Activated CD4-positive, alpha-beta T cell treated with anti-CD3 and anti-CD28 coated beads, Interleukin-2, amount 10 ng/mL, durations not matched to agents 24 days and 14 days (primary cell): ENCODE measurements at regions of chr4 and their contacts with region 1.

Region 1: DNA sequence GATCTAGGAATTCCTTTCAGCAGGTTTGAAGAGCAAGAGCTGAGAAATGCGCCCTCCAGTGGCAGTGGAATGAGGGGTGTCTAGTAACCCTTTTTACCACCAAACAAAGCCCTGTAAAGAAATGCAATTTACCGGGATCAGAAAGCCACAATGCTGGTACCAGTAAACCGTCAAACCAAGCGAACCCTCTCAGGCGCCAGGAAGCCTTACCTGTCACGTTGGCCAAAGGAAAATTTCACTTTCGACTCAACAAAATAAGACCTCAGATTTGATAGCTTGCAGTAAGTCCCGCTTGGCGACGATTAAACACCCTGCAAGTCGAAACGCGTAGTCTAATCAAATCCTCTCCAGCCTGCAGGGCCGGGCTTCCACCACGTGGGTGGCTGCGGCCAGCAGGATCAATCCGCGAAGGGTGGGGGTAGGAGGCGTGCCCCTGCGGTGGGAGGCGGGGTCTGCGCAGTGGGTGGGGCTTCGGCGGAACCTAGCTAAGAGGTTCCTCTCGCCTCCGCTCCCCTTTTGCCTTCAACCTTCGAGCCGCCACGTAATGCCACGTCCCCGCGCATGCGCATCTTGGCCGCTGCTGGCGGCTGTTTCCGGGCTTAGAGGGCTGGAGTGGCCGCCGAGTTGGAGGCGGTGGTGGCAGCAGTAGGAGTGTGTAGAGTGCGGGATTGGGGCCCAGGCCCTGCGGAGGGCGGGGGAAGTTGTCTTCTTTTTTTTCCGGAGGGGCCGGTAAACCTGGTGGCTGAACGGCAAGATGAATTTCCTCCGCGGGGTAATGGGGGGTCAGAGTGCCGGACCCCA is at the start of gene USO1:
- DNase-seq: peak; percentile 100
- H3K4me3 Mint-ChIP-seq: peak within 1 kb of the TSS; percentile 99
- H3K27ac Mint-ChIP-seq: peak within 1 kb of the TSS; percentile 99
- H3K4me1 Mint-ChIP-seq: peaks cover 41% of the 10 kb centered on the region
- H3K27me3 Mint-ChIP-seq: no peaks in the 10 kb centered on the region
- total RNA-seq, gene USO1: 42.8 and 44.0 TPM in 2 replicates

Region 2: GRCh38 chr4:75514131-75514948 is 209.9 kb before region 1 on chr4 and contains the starts of genes RCHY1 and THAP6:
- intact Hi-C with region 1: loop called (anchors 1 kb)
- DNase-seq: peak; percentile 98
- H3K4me3 Mint-ChIP-seq: no peak within 1 kb of the TSS
- H3K27ac Mint-ChIP-seq: peak within 1 kb of the TSS; percentile 99
- H3K4me1 Mint-ChIP-seq: peaks cover 29% of the 10 kb centered on the region
- H3K27me3 Mint-ChIP-seq: no peaks in the 10 kb centered on the region
- total RNA-seq, gene RCHY1: 22.4 and 29.4 TPM in 2 replicates
- total RNA-seq, gene THAP6: 16.3 and 22.7 TPM in 2 replicates

Region 3: GRCh38 chr4:75653845-75654503 is 70.3 kb before region 1 on chr4:
- intact Hi-C with region 1: loop called (anchors 1 kb)
- DNase-seq: no peak
- H3K4me3 Mint-ChIP-seq: peak overlapping the region; percentile 76
- H3K27ac Mint-ChIP-seq: peak overlapping the region; percentile 81
- H3K4me1 Mint-ChIP-seq: peaks cover 42% of the 10 kb centered on the region
- H3K27me3 Mint-ChIP-seq: no peaks in the 10 kb centered on the region

Region 4: GRCh38 chr4:75698162-75698962 is 25.9 kb before region 1 on chr4:
- intact Hi-C with region 1: loop called (anchors 2 kb)
- DNase-seq: peak; percentile 71
- H3K4me3 Mint-ChIP-seq: peak overlapping the region; percentile 27
- H3K27ac Mint-ChIP-seq: peak overlapping the region; percentile 80
- H3K4me1 Mint-ChIP-seq: peaks cover 27% of the 10 kb centered on the region
- H3K27me3 Mint-ChIP-seq: no peaks in the 10 kb centered on the region

Region 5: GRCh38 chr4:75940692-75941253 is 216.5 kb after region 1 on chr4 and contains the start of gene NAAA:
- intact Hi-C with region 1: loop called (anchors 1 kb)
- DNase-seq: peak; percentile 96
- H3K4me3 Mint-ChIP-seq: peak within 1 kb of the TSS; percentile 98
- H3K27ac Mint-ChIP-seq: peak within 1 kb of the TSS; percentile 99
- H3K4me1 Mint-ChIP-seq: peaks cover 17% of the 10 kb centered on the region
- H3K27me3 Mint-ChIP-seq: no peaks in the 10 kb centered on the region
- total RNA-seq, gene NAAA: 31.9 and 35.6 TPM in 2 replicates

Region 6: GRCh38 chr4:76148142-76148865 is 424.0 kb after region 1 on chr4 and contains the start of gene NUP54:
- intact Hi-C with region 1: loop called (anchors 5 kb)
- DNase-seq: peak; percentile 99
- H3K4me3 Mint-ChIP-seq: peak within 1 kb of the TSS; percentile 95
- H3K27ac Mint-ChIP-seq: peak within 1 kb of the TSS; percentile 92
- H3K4me1 Mint-ChIP-seq: peaks cover 29% of the 10 kb centered on the region
- H3K27me3 Mint-ChIP-seq: peaks cover 1% of the 10 kb centered on the region
- total RNA-seq, gene NUP54: 72.6 and 75.1 TPM in 2 replicates